ENCODE measurements at regions of chr19 and their contacts with region 1.

Region 1: GRCh38 chr19:4058034-4058692 is 8.5 kb downstream of the ZBTB7A start:
- DNase-seq: peak; percentile 89 to 98
- H3K4me3 ChIP-seq: peak overlapping the region; percentile 0
- CTCF ChIP-seq: no peak
- POLR2A ChIP-seq: no peak

Region 2: GRCh38 chr19:4103073-4103418 is 44.9 kb after region 1 on chr19:
- intact Hi-C with region 1: no loop called
- DNase-seq: no peak
- H3K4me3 ChIP-seq: no peak overlapping the region
- CTCF ChIP-seq: no peak
- POLR2A ChIP-seq: no peak

Region 3: DNA sequence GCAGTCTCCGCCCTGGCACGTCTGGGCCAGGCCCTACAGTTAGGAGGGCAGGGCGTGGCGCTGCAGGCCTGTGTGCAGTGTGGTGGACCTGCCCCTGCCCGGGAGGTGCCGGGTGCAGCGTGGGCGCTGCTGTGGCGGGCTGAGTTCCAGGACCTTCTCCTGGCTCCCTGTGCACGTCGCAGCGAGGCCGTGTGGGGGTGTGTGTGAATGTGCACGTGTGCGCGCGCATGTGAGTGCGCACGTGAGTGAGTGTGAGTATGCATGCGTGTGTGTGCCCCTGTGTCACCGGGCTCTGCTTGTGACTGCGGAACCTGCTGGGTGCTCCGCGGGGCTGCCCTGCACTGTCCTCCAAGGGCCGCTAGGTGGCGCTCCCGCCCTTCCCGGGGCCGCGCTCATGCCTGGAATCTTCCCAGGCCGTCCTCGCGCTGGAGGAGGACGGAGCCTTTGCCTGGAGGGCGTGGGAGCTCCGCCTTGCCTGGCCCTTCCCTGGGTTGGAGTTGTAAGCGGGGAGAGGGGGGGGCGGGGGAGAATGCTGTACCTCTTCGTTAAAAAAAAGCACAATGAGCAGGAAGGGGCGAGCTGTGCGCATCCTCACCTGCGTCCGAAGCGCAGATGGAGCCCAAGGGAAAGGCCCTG is 990.0 kb after region 1 on chr19:
- intact Hi-C with region 1: no loop called
- DNase-seq: peak; percentile 81 to 97
- H3K4me3 ChIP-seq: no peak overlapping the region
- CTCF ChIP-seq: peak in 1 of 3 donors; percentile 98
- POLR2A ChIP-seq: no peak

Region 4: DNA sequence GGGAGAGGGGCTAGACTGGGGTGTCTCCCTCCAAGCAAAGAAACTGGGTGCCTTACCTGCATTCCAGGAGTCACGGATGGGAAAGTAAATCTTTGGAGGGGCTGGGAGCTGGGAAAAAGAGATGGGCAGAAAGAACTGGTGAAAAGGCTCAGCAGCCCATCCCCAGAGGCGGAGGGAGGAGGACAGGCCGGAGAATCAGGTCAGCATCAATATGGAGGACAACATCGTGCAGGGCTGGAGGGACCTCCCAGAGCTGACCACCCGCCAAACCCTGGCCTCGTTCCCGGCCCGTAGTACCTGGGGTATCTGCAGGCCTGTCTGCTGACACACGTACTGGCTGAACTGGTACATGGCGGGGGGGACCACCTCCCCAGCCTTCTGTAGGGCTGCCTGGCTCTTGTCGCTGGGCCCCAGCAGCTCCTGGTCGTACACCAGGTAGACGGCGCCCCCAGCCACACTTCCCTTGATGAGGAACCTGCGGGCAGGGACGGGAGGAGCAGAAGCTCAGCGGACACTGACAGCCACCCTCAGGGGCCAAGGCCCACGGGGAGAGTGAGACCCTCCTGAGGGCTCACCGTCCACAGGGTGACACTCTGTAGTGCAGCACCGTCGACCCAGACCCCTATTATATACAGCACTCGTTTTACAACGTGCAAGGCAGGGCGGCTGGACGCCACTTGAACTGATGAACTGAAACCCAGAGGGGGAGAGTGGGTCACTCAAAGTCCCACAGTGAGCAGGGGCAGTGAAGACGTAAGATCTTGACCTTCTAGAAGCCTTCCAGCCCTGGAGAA is 1621.3 kb after region 1 on chr19:
- intact Hi-C with region 1: loop called (anchors 5 kb)
- DNase-seq: no peak
- H3K4me3 ChIP-seq: peak overlapping the region; percentile 97
- CTCF ChIP-seq: no peak
- POLR2A ChIP-seq: no peak